ENCODE measurements at regions of chr2 and their contacts with region 1.

Region 1: GRCh38 chr2:10072656-10073480 is 7.3 kb downstream of the CYS1 start:
- DNase-seq: peak; percentile 72
- ATAC-seq: peak; percentile 97
- H3K4me3 ChIP-seq: no peak overlapping the region
- H3K27ac ChIP-seq: no peak overlapping the region; the same call in 1 of the 2 replicates
- H3K4me1 ChIP-seq: peaks cover 31% of the 10 kb centered on the region
- H3K27me3 ChIP-seq: no peaks in the 10 kb centered on the region
- CTCF ChIP-seq: peak; percentile 92

Region 2: DNA sequence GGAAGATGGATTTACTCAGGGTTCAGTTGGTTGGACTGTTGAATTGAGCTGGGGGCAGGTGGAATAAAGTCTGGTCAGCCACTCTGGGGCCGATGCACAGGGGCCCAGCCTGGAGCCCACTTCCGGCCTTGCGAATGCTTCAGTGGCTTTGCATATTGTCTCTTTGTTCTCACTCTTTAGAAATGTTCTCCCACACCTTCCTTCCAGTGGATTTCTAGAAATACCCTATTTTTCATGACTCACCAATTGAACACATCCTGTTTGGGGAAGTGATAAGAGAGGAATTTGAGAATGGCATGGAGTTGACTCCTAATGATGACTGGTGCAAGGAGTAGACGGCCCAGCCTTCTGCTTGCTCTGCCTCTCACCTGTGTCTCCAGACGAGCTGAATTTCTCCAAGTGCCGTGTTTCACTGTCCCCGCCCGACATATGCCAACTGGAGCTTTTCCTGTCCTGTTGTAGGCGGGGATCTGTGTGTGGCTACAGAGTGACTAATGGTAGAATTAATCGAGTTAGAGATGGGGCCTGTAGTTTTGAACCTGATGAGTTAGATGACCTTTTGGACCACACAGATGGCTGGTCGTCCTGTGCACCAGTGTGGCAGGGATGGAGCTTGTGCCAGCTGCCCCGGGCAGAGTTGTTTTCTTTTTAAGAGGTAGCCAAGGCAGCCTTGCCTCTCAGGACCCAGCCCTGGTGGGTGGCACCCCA is 838.0 kb before region 1 on chr2:
- CTCF ChIA-PET with region 1: no interaction called
- POLR2A ChIA-PET with region 1: interaction called, 13 read pairs
- in situ Hi-C with region 1: no loop called
- intact Hi-C with region 1: no loop called
- DNase-seq: no peak
- ATAC-seq: peak; percentile 64
- H3K4me3 ChIP-seq: peak overlapping the region; percentile 24 to 45
- H3K27ac ChIP-seq: peak overlapping the region; percentile 100
- H3K4me1 ChIP-seq: peaks cover 99% of the 10 kb centered on the region
- H3K27me3 ChIP-seq: no peaks in the 10 kb centered on the region
- CTCF ChIP-seq: no peak

Region 3: GRCh38 chr2:10057231-10058107 is 15.4 kb before region 1 on chr2:
- CTCF ChIA-PET with region 1: interaction called, 10 read pairs
- POLR2A ChIA-PET with region 1: interaction called, 4 read pairs
- in situ Hi-C with region 1: no loop called
- intact Hi-C with region 1: no loop called
- DNase-seq: no peak
- ATAC-seq: peak; percentile 73
- H3K4me3 ChIP-seq: peak overlapping the region; percentile 29 to 44
- H3K27ac ChIP-seq: peak overlapping the region; percentile 75
- H3K4me1 ChIP-seq: peaks cover 19% of the 10 kb centered on the region
- H3K27me3 ChIP-seq: no peaks in the 10 kb centered on the region
- CTCF ChIP-seq: no peak

Region 4: GRCh38 chr2:10097352-10098148 is 24.7 kb after region 1 on chr2:
- CTCF ChIA-PET with region 1: interaction called, 97 read pairs
- POLR2A ChIA-PET with region 1: no interaction called
- in situ Hi-C with region 1: no loop called
- intact Hi-C with region 1: loop called (anchors 2 kb)
- DNase-seq: peak; percentile 50
- ATAC-seq: peak; percentile 97
- H3K4me3 ChIP-seq: no peak overlapping the region
- H3K27ac ChIP-seq: peak overlapping the region; percentile 36; the same call in 1 of the 2 replicates
- H3K4me1 ChIP-seq: peaks cover 10% of the 10 kb centered on the region; the same call in 1 of the 2 replicates
- H3K27me3 ChIP-seq: no peaks in the 10 kb centered on the region
- CTCF ChIP-seq: peak; percentile 98

Region 5: GRCh38 chr2:10103179-10103732 is 30.4 kb after region 1 on chr2:
- CTCF ChIA-PET with region 1: interaction called, 97 read pairs
- POLR2A ChIA-PET with region 1: no interaction called
- in situ Hi-C with region 1: no loop called
- intact Hi-C with region 1: no loop called
- DNase-seq: no peak
- ATAC-seq: no peak
- H3K4me3 ChIP-seq: no peak overlapping the region
- H3K27ac ChIP-seq: no peak overlapping the region
- H3K4me1 ChIP-seq: no peaks in the 10 kb centered on the region
- H3K27me3 ChIP-seq: no peaks in the 10 kb centered on the region
- CTCF ChIP-seq: no peak

Region 6: GRCh38 chr2:10122386-10123280 is 49.8 kb after region 1 on chr2 and contains the start of gene RRM2:
- CTCF ChIA-PET with region 1: interaction called, 11 read pairs
- POLR2A ChIA-PET with region 1: no interaction called
- in situ Hi-C with region 1: no loop called
- intact Hi-C with region 1: loop called (anchors 10 kb)
- DNase-seq: no peak
- ATAC-seq: peak; percentile 83
- H3K4me3 ChIP-seq: peak within 1 kb of the TSS; percentile 54 to 72
- H3K27ac ChIP-seq: peak within 1 kb of the TSS; percentile 100
- H3K4me1 ChIP-seq: peaks cover 35% of the 10 kb centered on the region
- H3K27me3 ChIP-seq: no peaks in the 10 kb centered on the region
- CTCF ChIP-seq: no peak
- total RNA-seq, gene RRM2: 294 TPM

Region 7: DNA sequence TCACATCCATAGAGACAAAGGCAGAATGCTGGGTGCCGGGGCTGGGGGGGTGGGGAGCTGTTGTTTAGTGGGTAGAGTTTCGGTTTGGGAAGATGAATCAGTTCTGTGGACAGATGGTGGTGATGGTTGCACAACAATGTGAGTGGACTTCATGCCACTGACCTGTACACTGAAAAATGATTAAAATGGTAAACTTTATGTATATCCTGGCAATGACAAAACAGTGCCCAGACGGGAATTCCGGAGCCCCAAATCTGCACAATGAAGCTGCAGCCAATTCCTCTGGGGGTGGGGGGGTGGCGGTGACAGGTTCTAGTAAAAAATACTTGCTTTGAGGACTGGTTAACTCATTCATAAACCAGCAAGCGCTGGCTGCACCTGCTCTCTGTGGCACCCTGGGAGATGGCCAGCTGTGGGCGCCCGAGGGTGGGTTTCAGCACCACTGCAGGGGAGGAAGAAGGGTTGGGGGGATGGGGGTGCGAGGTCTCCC is 148.1 kb after region 1 on chr2:
- CTCF ChIA-PET with region 1: no interaction called
- POLR2A ChIA-PET with region 1: no interaction called
- in situ Hi-C with region 1: no loop called
- intact Hi-C with region 1: no loop called
- DNase-seq: no peak
- ATAC-seq: no peak
- H3K4me3 ChIP-seq: no peak overlapping the region
- H3K27ac ChIP-seq: no peak overlapping the region
- H3K4me1 ChIP-seq: no peaks in the 10 kb centered on the region
- H3K27me3 ChIP-seq: no peaks in the 10 kb centered on the region
- CTCF ChIP-seq: no peak

Region 8: DNA sequence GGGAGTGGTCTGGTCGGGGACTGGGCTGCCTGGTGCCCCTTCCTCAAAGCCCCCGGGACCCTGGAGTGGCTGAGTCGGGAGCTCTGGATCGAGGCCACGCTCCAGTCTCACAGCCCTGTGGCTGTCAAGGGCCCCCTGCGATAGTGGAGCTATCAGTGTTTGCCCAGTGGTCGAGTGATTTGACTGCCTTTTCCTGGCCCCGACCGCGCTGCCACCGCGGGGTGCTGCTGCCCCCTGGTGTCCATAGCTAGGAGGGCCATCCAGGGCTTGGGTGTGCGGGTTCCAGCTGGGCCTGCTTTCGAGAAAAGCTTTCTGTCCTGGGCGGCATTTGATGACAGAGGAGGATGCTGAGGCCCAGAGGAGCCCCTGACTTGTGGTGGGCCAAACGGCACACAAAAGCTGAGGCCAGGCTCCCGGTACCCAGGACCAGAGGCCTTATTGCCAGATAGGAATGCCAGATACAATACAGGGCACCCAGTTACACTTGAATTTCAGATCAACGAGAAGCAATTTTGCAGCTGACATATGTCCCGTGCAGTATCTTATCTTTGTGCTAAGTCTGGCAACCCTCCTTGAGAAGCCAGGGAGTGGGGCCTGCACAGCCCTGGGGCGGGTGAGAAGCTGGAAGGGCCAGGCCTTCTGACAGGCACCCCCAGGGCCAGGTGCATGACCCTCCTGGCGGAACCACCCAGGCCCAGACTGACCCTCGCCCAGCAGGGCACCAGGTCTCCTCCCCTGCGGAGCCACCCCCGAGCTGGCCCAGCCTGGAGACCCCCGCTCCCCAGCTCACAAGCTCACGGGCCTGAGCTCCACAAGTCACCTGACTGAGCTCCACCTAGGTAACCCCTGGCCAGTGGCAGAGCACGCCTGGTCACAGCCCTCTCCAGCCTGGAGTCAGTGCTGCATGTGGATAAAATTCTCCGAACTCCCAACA is 362.3 kb after region 1 on chr2:
- CTCF ChIA-PET with region 1: interaction called, 9 read pairs
- POLR2A ChIA-PET with region 1: no interaction called
- in situ Hi-C with region 1: no loop called
- intact Hi-C with region 1: loop called (anchors 2 kb)
- DNase-seq: no peak
- ATAC-seq: peak; percentile 61
- H3K4me3 ChIP-seq: no peak overlapping the region
- H3K27ac ChIP-seq: peak overlapping the region; percentile 26; the same call in 1 of the 2 replicates
- H3K4me1 ChIP-seq: peaks cover 43% of the 10 kb centered on the region
- H3K27me3 ChIP-seq: no peaks in the 10 kb centered on the region
- CTCF ChIP-seq: peak; percentile 97